Cardiac septum (tissue), 1 donor: ENCODE measurements at regions of chr15 and their contacts with region 1.

Region 1: DNA sequence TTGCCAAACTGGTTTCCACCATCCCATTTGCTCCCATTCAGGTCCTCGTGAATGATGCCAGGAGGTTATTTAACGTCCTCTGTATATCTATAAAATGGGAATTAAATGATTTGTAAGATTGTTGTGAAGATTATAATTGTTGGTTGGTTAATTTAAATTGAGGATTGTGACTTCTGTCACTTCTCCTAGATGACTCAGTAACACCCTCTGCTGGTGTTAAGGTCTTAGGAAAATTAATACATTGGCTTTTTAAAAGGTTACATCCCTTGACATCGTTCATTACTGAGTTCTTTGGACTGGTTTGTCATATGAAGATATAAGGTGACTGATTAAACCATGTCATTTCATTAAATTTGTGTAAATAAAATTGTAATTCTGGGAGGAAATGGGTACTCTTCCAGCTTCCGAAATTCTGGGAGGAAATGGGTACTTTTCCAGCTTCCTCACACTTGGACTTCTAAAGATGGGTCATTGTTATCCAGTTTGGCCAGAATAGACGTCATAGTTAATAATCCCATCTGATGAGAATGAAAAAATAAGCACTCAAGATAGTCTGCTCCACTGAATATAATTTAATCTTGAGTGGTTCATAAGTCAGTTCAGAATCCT is 33.3 kb upstream of the PAQR5 start:
- DNase-seq: no peak

Region 2: DNA sequence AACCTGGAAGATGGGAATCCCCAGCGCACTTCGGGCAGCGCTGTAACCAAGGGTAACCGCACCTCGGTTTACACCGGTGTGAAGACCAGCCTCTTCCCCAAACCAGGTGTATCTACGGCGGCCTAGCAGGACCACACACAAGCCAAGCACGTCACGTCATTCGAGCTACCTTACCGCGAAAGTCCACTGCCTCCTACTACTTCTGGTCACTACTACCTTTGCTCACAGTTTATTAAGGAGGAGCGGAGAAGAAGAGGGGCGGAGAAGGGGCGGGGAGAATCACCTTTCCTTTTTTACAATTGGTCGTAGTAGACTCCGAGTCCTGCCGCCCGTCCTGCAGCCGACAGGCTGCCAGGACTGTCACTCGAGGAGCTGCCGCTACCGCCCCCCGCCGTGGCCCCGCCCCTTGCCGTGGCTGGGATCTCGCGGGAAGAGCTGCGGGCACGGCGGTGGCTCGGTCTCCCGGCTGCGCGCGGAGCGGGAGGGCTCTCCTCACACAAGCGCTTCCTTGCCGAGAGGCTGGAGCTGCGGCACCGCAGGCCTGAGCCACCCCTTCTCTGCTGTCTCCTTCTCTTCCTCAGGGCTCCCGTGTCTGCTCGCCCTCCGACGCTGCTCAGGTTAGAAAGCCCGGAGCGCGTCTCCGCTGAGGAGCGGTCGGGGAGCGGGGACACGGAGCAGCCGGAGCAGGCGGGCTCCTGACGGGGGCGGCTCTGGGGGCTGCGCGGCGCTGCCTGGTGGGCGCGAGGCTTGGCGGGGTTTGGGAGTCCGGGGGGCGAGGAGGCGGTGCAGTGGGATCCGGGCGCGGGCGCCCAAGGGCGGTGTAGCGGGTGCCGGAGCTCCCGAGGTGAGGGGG is 105.1 kb before region 1 on chr15 and contains the start of gene GLCE:
- intact Hi-C with region 1: loop called (anchors 5 kb)
- DNase-seq: peak; percentile 98
- total RNA-seq, gene GLCE: 6.2 TPM

Region 3: GRCh38 chr15:69666411-69666882 is 401.0 kb after region 1 on chr15:
- intact Hi-C with region 1: no loop called
- DNase-seq: peak; percentile 80